ENCODE measurements at regions of chr7 and their contacts with region 1.

Region 1: DNA sequence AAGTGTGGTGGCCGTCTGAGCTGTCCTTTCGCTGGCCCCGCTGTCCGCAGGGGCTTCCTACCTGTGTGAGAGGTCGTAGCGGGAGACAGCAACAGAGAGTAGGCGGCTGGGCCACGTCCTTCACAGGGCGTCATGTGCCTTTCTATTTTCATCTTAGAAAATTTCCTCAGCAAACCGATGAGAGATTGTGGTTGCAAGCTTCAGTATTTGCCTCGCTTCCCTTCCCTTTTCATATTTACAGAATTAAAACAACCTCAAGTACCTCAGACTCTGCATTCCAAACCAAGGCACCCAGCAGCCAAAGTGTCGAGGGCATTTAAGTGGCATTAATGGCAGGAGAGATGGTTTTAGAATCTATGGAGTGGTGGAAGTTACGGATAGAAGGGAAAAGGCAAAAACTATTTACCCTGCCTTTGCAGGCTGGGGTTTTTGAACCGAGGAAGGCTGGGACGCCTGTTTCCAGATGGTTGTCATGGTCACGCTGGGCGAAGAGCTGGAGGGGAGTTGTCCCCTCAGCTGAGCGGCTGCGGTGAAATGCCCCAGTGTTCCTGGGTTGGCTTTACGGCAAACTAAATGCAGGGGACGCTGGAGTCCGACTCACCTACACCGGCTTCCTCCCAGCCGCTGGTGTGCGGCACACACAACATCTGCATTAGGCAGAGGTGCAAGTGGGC is 41.9 kb downstream of the WIPI2 start:
- DNase-seq: no peak
- H3K4me3 ChIP-seq: no peak overlapping the region
- H3K27ac ChIP-seq: no peak overlapping the region
- H3K4me1 ChIP-seq: no peaks in the 10 kb centered on the region
- H3K27me3 ChIP-seq: no peaks in the 10 kb centered on the region
- CTCF ChIP-seq: no peak
- POLR2A ChIP-seq: no peak

Region 2: DNA sequence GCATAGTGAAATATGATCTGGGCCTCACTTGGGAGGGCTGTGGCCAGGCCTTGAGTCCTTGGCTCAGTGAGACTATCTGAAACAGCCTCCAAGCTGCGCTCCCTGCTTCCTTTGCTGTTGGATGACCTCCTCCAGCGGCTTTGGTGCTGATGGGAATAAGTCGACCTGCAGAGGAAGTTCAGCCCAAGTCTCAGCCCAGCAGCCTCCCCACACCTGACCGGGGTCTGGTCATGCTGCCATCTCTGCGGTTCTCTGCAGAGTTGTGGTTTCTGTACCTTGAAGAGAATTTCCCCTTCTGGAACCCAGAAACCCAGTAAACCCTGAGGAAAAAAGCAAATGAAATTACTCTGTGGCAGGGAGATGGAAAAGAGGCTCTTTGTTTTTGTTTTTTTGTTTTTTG is 190.9 kb before region 1 on chr7:
- intact Hi-C with region 1: no loop called
- DNase-seq: no peak
- H3K4me3 ChIP-seq: no peak overlapping the region
- H3K27ac ChIP-seq: no peak overlapping the region
- H3K4me1 ChIP-seq: no peaks in the 10 kb centered on the region
- H3K27me3 ChIP-seq: no peaks in the 10 kb centered on the region
- CTCF ChIP-seq: no peak
- POLR2A ChIP-seq: no peak

Region 3: DNA sequence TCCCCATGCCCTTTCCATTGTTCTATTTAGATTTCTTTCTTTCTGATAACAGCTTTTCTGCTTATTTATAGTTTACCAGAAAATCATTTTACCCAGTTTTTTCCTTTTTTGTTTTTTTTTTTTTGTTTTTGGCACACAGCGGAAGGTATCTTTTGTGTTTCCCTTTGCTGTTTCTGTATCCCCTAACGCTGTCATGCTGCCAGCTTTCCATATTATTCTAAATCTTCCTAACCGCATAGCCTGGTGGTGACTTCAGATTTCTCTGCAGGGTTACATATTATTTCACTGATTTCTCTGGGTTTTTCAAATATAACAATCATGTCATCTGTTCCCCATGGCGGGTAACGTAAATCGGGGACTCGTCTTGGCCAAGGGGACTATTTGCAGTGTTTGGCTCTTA is 46.8 kb after region 1 on chr7:
- intact Hi-C with region 1: loop called (anchors 2 kb)
- DNase-seq: no peak
- H3K4me3 ChIP-seq: no peak overlapping the region
- H3K27ac ChIP-seq: no peak overlapping the region
- H3K4me1 ChIP-seq: no peaks in the 10 kb centered on the region
- H3K27me3 ChIP-seq: no peaks in the 10 kb centered on the region
- CTCF ChIP-seq: no peak
- POLR2A ChIP-seq: no peak

Region 4: DNA sequence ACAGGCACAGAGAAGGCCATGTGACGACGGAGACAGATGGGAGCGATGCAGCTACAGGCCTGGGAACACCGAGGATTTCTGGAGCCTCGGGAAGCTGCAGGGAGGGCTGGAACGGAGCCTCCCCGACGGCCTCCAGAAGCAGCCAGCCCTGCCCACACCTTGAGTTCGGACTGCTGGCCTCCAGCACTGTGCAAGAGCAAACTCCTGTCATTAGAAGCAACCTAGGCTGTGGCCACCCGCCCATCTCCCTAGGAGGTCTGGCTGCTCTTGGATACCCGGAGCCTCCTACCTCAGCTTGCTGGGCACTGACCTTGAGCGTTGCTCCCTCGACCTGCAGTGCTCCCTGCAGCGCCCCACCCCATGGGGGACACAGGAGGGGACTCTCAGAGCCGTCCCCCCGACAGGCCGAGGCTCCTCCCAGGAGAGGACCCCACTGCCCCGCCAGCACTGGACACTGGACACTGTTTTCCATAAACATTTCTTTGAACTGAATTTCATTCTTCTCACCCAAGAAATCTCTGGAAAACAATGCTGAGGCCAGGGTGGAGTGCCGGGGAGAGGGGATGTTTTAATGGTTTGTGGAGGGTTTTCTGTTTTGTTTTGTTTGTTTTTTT is 214.1 kb after region 1 on chr7:
- intact Hi-C with region 1: loop called (anchors 5 kb)
- DNase-seq: no peak
- H3K4me3 ChIP-seq: no peak overlapping the region
- H3K27ac ChIP-seq: no peak overlapping the region
- H3K4me1 ChIP-seq: no peaks in the 10 kb centered on the region
- H3K27me3 ChIP-seq: no peaks in the 10 kb centered on the region
- CTCF ChIP-seq: no peak
- POLR2A ChIP-seq: no peak